ENCODE measurements at regions of chr4 and their contacts with region 1.

Region 1: DNA sequence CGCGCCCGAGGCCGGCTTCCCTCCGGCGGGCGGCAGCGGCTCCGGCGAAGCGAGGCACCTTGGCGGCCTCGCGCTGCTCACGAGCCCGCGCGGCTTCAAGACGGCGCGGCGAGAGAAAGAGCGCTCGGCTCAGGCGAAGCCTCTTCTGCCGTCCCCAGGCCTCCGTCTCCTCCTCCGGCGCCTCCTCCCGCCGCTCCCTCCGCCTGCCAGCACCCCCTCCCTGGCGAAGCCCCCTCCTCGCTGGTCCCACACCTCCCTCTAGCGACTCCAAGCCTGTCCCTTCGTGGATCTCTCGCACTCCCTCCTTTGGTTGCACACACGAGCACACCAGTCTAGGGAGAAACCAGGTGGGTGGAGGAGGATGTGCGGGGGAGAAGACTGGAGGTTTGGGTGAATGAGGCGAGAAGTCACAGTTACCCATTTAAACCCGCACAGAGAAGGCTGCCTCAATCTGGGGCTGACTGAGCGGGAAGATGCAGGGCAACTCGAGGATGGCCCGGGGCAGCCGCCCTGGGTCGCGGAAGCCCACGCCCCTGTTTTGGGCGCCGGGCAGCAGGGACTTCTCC is at the start of gene CAMK2D:
- DNase-seq: peak; percentile 79
- H3K4me3 Mint-ChIP-seq: peak within 1 kb of the TSS; percentile 100
- H3K27ac Mint-ChIP-seq: peak within 1 kb of the TSS; percentile 100
- H3K4me1 Mint-ChIP-seq: peaks cover 44% of the 10 kb centered on the region
- H3K27me3 Mint-ChIP-seq: no peaks in the 10 kb centered on the region
- total RNA-seq, gene CAMK2D: 67.7 and 73.5 TPM in 2 replicates

Region 2: DNA sequence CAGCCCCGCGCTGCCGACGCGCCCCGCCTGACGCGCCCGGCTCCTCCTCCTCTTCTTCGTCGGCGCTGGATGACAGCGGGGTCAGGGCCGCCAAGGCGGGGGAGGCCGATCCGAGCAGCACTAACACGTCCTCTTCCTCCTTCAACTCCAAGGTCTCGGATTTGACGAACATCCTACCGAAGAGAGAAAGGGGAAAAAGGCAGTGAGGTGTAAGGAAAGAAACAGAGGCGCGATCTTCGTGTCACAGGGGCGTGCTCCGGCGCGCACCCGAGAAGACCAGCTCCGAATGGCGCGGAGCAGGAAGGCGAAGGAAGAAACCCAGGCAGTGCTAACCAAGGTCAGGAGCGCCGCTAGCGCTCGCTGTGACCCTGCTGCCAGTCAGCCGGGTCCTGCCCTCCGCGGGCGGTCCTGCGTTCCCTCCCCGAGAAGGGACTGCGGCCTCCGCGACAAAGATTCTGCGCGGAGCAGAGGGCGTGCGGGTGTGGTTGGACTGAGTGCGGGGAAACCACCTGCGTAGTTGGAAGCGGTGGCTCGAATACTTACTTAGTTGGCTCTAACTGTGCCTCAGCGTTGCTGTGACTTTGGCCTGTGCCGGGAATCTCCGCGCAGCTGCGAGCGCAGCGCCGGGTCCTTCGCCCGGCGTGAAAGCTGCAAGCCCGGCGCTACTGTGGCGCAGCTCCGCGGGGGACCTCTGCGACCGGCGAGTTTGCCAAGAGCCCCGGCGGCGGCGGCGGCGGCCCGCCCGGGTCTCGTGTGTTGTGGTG is 1246.2 kb before region 1 on chr4:
- intact Hi-C with region 1: loop called (anchors 5 kb)
- DNase-seq: peak; percentile 49
- H3K4me3 Mint-ChIP-seq: peak overlapping the region; percentile 95
- H3K27ac Mint-ChIP-seq: peak overlapping the region; percentile 93
- H3K4me1 Mint-ChIP-seq: peaks cover 79% of the 10 kb centered on the region
- H3K27me3 Mint-ChIP-seq: peaks cover 82% of the 10 kb centered on the region

Region 3: DNA sequence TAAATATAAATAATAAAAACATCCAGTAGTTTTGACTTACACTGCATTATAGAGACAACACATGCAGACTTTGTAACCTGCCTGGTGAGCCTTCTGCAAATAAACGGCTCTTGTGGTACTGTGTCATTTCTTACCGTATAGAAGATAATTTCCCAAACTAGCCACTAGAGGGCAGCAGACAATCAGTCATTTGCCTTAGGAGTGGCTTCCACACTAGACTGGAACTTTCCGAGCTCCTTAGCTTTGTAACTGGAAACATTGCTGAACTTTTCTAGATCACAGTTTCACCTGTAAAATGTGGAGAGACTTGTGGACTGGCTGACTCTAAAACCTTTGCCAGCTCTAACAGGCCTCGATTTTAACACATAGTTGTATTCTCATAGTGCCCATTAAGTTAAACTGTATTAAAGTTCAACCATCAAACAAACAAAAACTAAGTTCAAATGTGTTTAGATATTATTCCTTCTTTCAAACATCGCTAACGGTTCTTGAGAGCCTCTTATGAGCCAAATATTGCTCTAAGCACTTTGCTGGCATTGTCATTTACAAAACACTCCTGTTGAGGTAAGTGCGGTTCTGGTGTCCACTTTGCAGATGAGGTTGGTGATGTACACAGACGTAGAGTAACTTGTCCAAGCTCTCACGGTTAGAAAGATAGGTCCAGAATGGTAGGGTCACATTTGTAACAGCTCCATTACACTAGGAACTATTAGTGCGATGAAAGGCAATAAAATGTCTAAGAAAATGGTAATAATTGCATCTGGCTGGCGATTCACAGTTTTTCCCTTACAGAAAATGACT is 366.8 kb before region 1 on chr4:
- intact Hi-C with region 1: loop called (anchors 1 kb)
- DNase-seq: peak; percentile 48
- H3K4me3 Mint-ChIP-seq: no peak overlapping the region
- H3K27ac Mint-ChIP-seq: no peak overlapping the region
- H3K4me1 Mint-ChIP-seq: no peaks in the 10 kb centered on the region
- H3K27me3 Mint-ChIP-seq: peaks cover 2% of the 10 kb centered on the region

Region 4: GRCh38 chr4:113539408-113539807 is 222.3 kb before region 1 on chr4:
- intact Hi-C with region 1: loop called (anchors 1 kb)
- DNase-seq: no peak
- H3K4me3 Mint-ChIP-seq: peak overlapping the region; percentile 29
- H3K27ac Mint-ChIP-seq: peak overlapping the region; percentile 80
- H3K4me1 Mint-ChIP-seq: peaks cover 39% of the 10 kb centered on the region
- H3K27me3 Mint-ChIP-seq: no peaks in the 10 kb centered on the region

Region 5: GRCh38 chr4:113625902-113626301 is 135.8 kb before region 1 on chr4:
- intact Hi-C with region 1: loop called (anchors 2 kb)
- DNase-seq: no peak
- H3K4me3 Mint-ChIP-seq: no peak overlapping the region
- H3K27ac Mint-ChIP-seq: peak overlapping the region; percentile 25
- H3K4me1 Mint-ChIP-seq: peaks cover 40% of the 10 kb centered on the region
- H3K27me3 Mint-ChIP-seq: no peaks in the 10 kb centered on the region

Region 6: GRCh38 chr4:113711883-113712662 is 49.6 kb before region 1 on chr4:
- intact Hi-C with region 1: no loop called
- DNase-seq: no peak
- H3K4me3 Mint-ChIP-seq: no peak overlapping the region
- H3K27ac Mint-ChIP-seq: no peak overlapping the region
- H3K4me1 Mint-ChIP-seq: peaks cover 21% of the 10 kb centered on the region
- H3K27me3 Mint-ChIP-seq: no peaks in the 10 kb centered on the region

Region 7: GRCh38 chr4:113869743-113870375 is 108.2 kb after region 1 on chr4:
- intact Hi-C with region 1: loop called (anchors 1 kb)
- DNase-seq: peak; percentile 2
- H3K4me3 Mint-ChIP-seq: peak overlapping the region; percentile 53
- H3K27ac Mint-ChIP-seq: peak overlapping the region; percentile 88
- H3K4me1 Mint-ChIP-seq: peaks cover 16% of the 10 kb centered on the region
- H3K27me3 Mint-ChIP-seq: no peaks in the 10 kb centered on the region

Region 8: DNA sequence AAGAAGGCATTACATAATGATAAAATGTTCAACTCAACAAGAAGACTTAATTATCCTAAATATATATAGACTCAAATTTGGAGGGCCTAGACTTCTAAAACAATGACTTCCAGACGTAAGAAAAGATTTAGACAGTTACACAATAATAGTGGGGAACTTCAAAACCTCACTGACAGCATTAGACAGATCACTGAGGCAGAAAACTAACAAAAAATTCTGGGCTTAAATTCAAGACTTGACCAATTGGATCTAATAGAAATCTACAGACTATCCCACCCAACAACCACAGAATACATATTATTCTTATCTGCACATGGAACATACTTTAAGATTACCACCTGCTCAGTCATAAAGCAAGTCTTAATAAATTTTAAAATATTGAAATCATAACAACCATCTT is 311.1 kb after region 1 on chr4:
- intact Hi-C with region 1: loop called (anchors 2 kb)
- DNase-seq: no peak
- H3K4me3 Mint-ChIP-seq: no peak overlapping the region
- H3K27ac Mint-ChIP-seq: no peak overlapping the region
- H3K4me1 Mint-ChIP-seq: no peaks in the 10 kb centered on the region
- H3K27me3 Mint-ChIP-seq: peaks cover 30% of the 10 kb centered on the region